Mammary epithelial cell (primary cell): ENCODE measurements at regions of chr21 and their contacts with region 1.

Region 1: GRCh38 chr21:17925000-17925610 is 105.9 kb upstream of the C21orf91 start:
- DNase-seq: peak; percentile 68
- H3K4me3 ChIP-seq: no peak overlapping the region
- H3K27ac ChIP-seq: no peak overlapping the region
- H3K4me1 ChIP-seq: peaks cover 21% of the 10 kb centered on the region
- H3K27me3 ChIP-seq: no peaks in the 10 kb centered on the region
- CTCF ChIP-seq: peak; percentile 88 to 92

Region 2: GRCh38 chr21:17611414-17612022 is 313.6 kb before region 1 on chr21:
- CTCF ChIA-PET with region 1: no interaction called
- dilution Hi-C with region 1: no loop called
- in situ Hi-C with region 1: no loop called
- intact Hi-C with region 1: loop called (anchors 5 kb)
- DNase-seq: peak; percentile 89
- H3K4me3 ChIP-seq: peak overlapping the region; percentile 75 to 93 (median 90)
- H3K27ac ChIP-seq: peak overlapping the region; percentile 96
- H3K4me1 ChIP-seq: peaks cover 27% of the 10 kb centered on the region
- H3K27me3 ChIP-seq: no peaks in the 10 kb centered on the region
- CTCF ChIP-seq: peak in 1 of 2 donors; percentile 3

Region 3: DNA sequence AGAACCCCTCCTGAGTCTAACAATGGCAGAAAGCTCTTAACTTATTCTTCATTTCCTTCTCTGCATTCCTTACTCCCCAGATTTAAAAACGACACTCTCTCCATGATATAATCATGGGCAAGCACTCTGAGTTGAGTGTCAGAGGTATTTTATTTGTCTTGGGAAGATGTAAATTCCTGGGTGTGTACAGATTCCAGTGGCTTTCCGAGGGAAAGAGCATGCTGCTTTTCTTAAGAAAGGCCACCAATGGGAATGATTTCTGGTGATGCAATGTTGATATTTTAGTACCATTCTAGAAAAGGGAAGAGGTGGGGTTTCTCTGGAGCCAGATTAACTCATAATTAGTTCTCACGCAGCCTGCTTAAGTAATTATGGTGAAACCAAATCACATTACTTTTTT is 264.7 kb before region 1 on chr21:
- CTCF ChIA-PET with region 1: no interaction called
- dilution Hi-C with region 1: loop called (anchors 25 kb)
- in situ Hi-C with region 1: no loop called
- intact Hi-C with region 1: no loop called
- DNase-seq: no peak
- H3K4me3 ChIP-seq: no peak overlapping the region
- H3K27ac ChIP-seq: no peak overlapping the region
- H3K4me1 ChIP-seq: no peaks in the 10 kb centered on the region
- H3K27me3 ChIP-seq: peaks cover 3% of the 10 kb centered on the region
- CTCF ChIP-seq: no peak

Region 4: DNA sequence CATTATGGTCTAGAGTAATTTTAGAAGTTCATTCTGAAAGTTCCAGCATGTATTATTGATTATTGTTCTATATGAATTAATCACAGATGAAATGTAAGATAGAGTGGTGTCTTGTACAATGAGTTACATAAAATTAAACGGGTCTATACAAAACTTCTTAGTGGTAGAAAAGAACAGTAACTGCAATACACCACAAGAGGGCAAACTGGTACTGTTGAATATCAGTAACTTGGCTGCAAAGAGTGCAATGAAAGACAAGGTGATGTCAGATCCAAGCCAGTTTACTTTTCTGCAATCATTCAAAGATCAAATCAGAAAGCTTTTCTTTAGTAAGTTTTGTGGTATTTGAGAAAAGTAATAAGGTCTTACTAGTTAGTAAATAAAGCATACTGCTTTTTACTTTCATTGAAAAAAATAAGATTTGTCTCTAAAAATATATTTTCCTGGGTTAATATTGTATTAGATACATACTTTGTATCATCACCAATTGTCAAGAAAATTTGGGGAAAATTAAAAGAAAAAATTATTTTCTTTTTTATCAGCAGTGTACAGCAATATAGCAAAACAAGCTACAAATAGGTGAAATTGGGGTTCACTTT is 246.0 kb before region 1 on chr21:
- CTCF ChIA-PET with region 1: no interaction called
- dilution Hi-C with region 1: loop called (anchors 25 kb)
- in situ Hi-C with region 1: no loop called
- intact Hi-C with region 1: loop called (anchors 1 kb)
- DNase-seq: peak; percentile 43
- H3K4me3 ChIP-seq: no peak overlapping the region
- H3K27ac ChIP-seq: no peak overlapping the region
- H3K4me1 ChIP-seq: peaks cover under 1% of the 10 kb centered on the region
- H3K27me3 ChIP-seq: no peaks in the 10 kb centered on the region
- CTCF ChIP-seq: peak; percentile 74

Region 5: DNA sequence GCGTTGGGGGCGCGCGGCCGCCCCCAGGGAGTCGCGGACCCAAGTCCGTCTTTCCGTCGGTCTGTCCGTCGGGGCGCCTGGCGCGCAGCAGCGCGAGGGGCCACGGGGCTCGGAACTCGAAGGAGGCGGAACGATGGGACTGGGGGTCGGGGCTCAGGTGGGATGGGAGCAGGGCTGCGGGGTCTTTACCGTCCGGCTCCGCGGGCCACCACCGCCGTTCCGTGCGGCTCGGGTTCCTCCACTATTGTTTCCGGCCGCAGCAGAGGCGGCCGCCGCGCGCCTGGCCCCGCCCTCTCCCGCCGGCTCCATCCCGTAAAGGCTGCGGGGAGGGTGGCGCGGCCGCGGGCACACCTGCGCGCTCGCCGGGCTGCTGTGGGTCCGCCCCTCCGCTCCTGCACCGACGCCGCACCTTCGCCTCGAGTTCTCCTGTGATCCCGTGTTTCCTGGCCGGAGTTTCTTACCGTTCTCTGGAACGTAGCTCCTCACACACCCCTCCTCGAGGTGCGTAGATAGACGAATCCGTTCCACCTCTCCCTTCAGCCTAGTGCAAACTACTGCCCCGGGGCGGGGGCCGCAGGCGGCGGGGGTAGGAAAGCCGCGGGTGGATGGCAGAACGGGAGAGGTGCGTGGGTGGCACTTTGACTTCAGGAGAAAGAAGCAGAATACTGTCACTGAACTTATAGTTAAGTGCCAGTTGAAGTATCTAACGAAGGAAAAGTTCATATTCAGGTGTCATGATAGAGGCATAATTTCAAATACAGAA is 105.8 kb before region 1 on chr21 and contains the start of gene C21orf91:
- CTCF ChIA-PET with region 1: no interaction called
- dilution Hi-C with region 1: no loop called
- in situ Hi-C with region 1: no loop called
- intact Hi-C with region 1: loop called (anchors 1 kb)
- DNase-seq: peak; percentile 79
- H3K4me3 ChIP-seq: peak within 1 kb of the TSS; percentile 74 to 95 (median 95)
- H3K27ac ChIP-seq: peak within 1 kb of the TSS; percentile 86
- H3K4me1 ChIP-seq: peaks cover 10% of the 10 kb centered on the region
- H3K27me3 ChIP-seq: no peaks in the 10 kb centered on the region
- CTCF ChIP-seq: no peak
- total RNA-seq, gene C21orf91: 35.2 to 38.9 TPM

Region 6: GRCh38 chr21:17903029-17903806 is 21.9 kb before region 1 on chr21:
- CTCF ChIA-PET with region 1: no interaction called
- dilution Hi-C with region 1: no loop called
- in situ Hi-C with region 1: no loop called
- intact Hi-C with region 1: loop called (anchors 2 kb)
- DNase-seq: no peak
- H3K4me3 ChIP-seq: no peak overlapping the region
- H3K27ac ChIP-seq: no peak overlapping the region
- H3K4me1 ChIP-seq: peaks cover 3% of the 10 kb centered on the region
- H3K27me3 ChIP-seq: no peaks in the 10 kb centered on the region
- CTCF ChIP-seq: peak in 1 of 2 donors; percentile 25

Region 7: DNA sequence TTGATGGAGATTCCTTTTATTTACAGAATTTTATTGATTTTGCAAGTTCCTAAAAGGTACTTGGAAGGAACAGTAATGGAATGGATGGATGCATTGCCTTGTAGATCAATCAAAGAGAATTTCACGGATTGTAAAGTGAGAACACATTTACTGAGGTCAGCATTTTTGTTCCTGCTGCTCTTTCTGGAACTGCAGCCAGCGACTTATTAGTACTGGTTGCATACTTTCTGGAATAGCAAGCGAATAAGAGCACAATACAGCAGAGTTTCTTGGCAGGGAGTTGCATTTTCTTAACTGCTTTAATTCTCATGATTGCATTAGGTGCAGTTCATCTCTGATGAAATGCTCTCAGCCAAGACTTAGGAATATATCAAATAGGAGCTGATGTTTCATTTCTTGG is 213.4 kb after region 1 on chr21:
- CTCF ChIA-PET with region 1: no interaction called
- dilution Hi-C with region 1: no loop called
- in situ Hi-C with region 1: no loop called
- intact Hi-C with region 1: no loop called
- DNase-seq: no peak
- H3K4me3 ChIP-seq: no peak overlapping the region
- H3K27ac ChIP-seq: no peak overlapping the region
- H3K4me1 ChIP-seq: no peaks in the 10 kb centered on the region
- H3K27me3 ChIP-seq: no peaks in the 10 kb centered on the region
- CTCF ChIP-seq: no peak

Region 8: DNA sequence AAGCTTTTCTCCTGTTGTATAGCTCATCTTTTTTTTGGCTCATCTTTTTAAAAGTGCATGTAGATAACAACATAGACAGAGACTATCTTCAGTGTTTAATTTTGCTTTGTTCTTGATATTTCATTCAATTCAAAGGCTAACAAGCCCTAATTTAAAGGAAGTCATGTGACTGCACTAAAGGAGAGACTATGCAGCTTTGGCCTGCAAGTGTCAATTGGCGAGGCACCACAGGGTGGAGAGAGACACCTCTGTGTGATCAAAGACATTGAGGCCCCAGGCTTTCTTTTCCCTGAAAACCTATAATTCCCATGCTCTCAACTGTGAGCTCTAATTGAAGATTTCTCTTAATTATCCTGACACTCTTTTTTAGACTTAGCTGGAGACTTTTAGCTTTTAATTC is 373.1 kb after region 1 on chr21:
- CTCF ChIA-PET with region 1: no interaction called
- dilution Hi-C with region 1: no loop called
- in situ Hi-C with region 1: no loop called
- intact Hi-C with region 1: loop called (anchors 10 kb)
- DNase-seq: no peak
- H3K4me3 ChIP-seq: no peak overlapping the region
- H3K27ac ChIP-seq: no peak overlapping the region
- H3K4me1 ChIP-seq: no peaks in the 10 kb centered on the region
- H3K27me3 ChIP-seq: no peaks in the 10 kb centered on the region
- CTCF ChIP-seq: no peak